MCF 10A (cell line): ENCODE measurements at regions of chr12 and their contacts with region 1.

Region 1: DNA sequence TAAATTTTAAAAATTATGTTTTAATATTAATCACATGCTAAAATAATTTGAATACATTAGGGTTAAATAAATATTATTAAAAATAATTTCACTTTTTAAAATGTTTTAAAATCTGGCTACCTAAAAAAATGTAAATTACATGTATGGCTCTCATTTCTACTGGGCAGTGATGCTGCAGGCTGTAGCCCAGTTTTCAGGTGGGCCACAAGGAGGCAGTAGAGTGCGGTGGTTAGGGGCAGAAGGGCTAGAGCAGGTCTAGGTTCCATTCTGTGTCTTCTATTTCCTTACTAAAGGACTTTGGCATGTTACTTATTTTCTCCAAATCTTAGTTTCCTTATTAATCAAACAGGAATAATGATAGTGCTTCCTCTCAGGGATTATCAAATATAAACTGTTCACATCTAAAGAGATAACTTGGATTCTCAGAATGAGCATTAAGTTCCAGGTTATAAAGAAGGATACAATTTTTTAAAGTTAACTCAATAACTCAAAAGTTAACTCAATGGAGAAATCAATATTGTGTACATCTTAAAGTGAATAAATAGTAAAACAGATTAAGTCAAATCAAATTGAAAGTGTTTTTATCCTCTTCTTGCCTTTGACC is 54.9 kb upstream of the OVCH1 start:
- DNase-seq: peak; percentile 68
- H3K4me3 Mint-ChIP-seq: no peak overlapping the region
- H3K27ac Mint-ChIP-seq: no peak overlapping the region
- H3K4me1 Mint-ChIP-seq: no peaks in the 10 kb centered on the region
- H3K27me3 Mint-ChIP-seq: no peaks in the 10 kb centered on the region
- CTCF ChIP-seq: peak; percentile 89

Region 2: DNA sequence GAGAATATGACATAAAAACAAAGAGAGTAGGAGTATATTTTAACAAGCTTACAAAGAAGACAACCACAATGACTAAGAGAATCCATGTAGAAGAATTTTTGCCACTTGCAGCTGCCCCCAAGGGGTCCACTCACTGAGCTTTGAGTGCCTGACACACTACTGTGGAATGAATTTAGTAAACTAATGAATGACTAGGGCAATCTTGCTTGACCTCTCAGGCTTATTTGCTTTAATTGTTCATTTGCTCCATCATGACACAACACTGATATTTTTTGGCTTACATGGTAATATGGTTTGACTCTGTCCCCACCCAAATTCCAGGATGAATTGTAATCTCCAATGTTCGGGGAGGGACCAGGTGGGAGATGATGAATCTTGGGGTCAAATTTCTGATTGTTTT is 652.5 kb before region 1 on chr12:
- CTCF ChIA-PET with region 1: no interaction called
- POLR2A ChIA-PET with region 1: no interaction called
- intact Hi-C with region 1: no loop called
- DNase-seq: peak; percentile 5
- H3K4me3 Mint-ChIP-seq: no peak overlapping the region
- H3K27ac Mint-ChIP-seq: no peak overlapping the region
- H3K4me1 Mint-ChIP-seq: no peaks in the 10 kb centered on the region
- H3K27me3 Mint-ChIP-seq: no peaks in the 10 kb centered on the region
- CTCF ChIP-seq: no peak

Region 3: GRCh38 chr12:29365091-29365490 is 187.3 kb before region 1 on chr12:
- CTCF ChIA-PET with region 1: no interaction called
- POLR2A ChIA-PET with region 1: no interaction called
- intact Hi-C with region 1: no loop called
- DNase-seq: no peak
- H3K4me3 Mint-ChIP-seq: no peak overlapping the region
- H3K27ac Mint-ChIP-seq: no peak overlapping the region
- H3K4me1 Mint-ChIP-seq: no peaks in the 10 kb centered on the region
- H3K27me3 Mint-ChIP-seq: no peaks in the 10 kb centered on the region
- CTCF ChIP-seq: no peak

Region 4: GRCh38 chr12:29844667-29845066 is 292.2 kb after region 1 on chr12:
- CTCF ChIA-PET with region 1: no interaction called
- POLR2A ChIA-PET with region 1: no interaction called
- intact Hi-C with region 1: loop called (anchors 1 kb)
- DNase-seq: peak; percentile 35
- H3K4me3 Mint-ChIP-seq: no peak overlapping the region
- H3K27ac Mint-ChIP-seq: no peak overlapping the region
- H3K4me1 Mint-ChIP-seq: no peaks in the 10 kb centered on the region
- H3K27me3 Mint-ChIP-seq: no peaks in the 10 kb centered on the region
- CTCF ChIP-seq: peak; percentile 16

Region 5: GRCh38 chr12:30134229-30134628 is 581.8 kb after region 1 on chr12:
- CTCF ChIA-PET with region 1: no interaction called
- POLR2A ChIA-PET with region 1: no interaction called
- intact Hi-C with region 1: loop called (anchors 1 kb)
- DNase-seq: peak; percentile 63
- H3K4me3 Mint-ChIP-seq: no peak overlapping the region
- H3K27ac Mint-ChIP-seq: no peak overlapping the region
- H3K4me1 Mint-ChIP-seq: peaks cover 6% of the 10 kb centered on the region
- H3K27me3 Mint-ChIP-seq: no peaks in the 10 kb centered on the region
- CTCF ChIP-seq: peak; percentile 37